Body of pancreas (tissue), 4 donors: ENCODE measurements at regions of chr12 and their contacts with region 1.

Region 1: GRCh38 chr12:52582971-52583456 is 9.4 kb upstream of the KRT74 start:
- DNase-seq: peak; percentile 57 to 74 (median 70)
- ATAC-seq: peak; percentile 91
- H3K4me3 ChIP-seq: no peak overlapping the region
- H3K27ac ChIP-seq: no peak overlapping the region
- H3K4me1 ChIP-seq: no peaks in the 10 kb centered on the region
- H3K27me3 ChIP-seq: no peaks in the 10 kb centered on the region
- CTCF ChIP-seq: peak; percentile 43 to 84 (median 73)
- POLR2A ChIP-seq: no peak

Region 2: GRCh38 chr12:52870351-52871290 is 287.6 kb after region 1 on chr12:
- intact Hi-C with region 1: loop called (anchors 5 kb)
- DNase-seq: peak; percentile 56 to 78 (median 69)
- ATAC-seq: no peak
- H3K4me3 ChIP-seq: no peak overlapping the region
- H3K27ac ChIP-seq: peak overlapping the region in 1 of 4 donors; percentile 0
- H3K4me1 ChIP-seq: peaks cover 17% of the 10 kb centered on the region
- H3K27me3 ChIP-seq: no peaks in the 10 kb centered on the region
- CTCF ChIP-seq: peak; percentile 24 to 67 (median 58)
- POLR2A ChIP-seq: no peak

Region 3: GRCh38 chr12:52976147-52977071 is 393.4 kb after region 1 on chr12:
- intact Hi-C with region 1: loop called (anchors 10 kb)
- DNase-seq: peak in 1 of 4 donors; percentile 13
- ATAC-seq: no peak
- H3K4me3 ChIP-seq: no peak overlapping the region
- H3K27ac ChIP-seq: no peak overlapping the region
- H3K4me1 ChIP-seq: peaks cover 44% of the 10 kb centered on the region
- H3K27me3 ChIP-seq: no peaks in the 10 kb centered on the region
- CTCF ChIP-seq: peak in 1 of 7 experiments; percentile 13
- POLR2A ChIP-seq: no peak